ENCODE measurements at regions of chr4 and their contacts with region 1.

Region 1: GRCh38 chr4:165207431-165208220 is at the start of gene KLHL2:
- DNase-seq: peak; percentile 78
- H3K4me3 ChIP-seq: peak within 1 kb of the TSS; percentile 82 to 92
- H3K27ac ChIP-seq: peak within 1 kb of the TSS; percentile 72 to 84
- H3K4me1 ChIP-seq: no peaks in the 10 kb centered on the region
- H3K27me3 ChIP-seq: no peaks in the 10 kb centered on the region
- CTCF ChIP-seq: no peak
- POLR2A ChIP-seq: peak; percentile 36
- total RNA-seq, gene KLHL2: 20.4 to 22.2 TPM

Region 2: DNA sequence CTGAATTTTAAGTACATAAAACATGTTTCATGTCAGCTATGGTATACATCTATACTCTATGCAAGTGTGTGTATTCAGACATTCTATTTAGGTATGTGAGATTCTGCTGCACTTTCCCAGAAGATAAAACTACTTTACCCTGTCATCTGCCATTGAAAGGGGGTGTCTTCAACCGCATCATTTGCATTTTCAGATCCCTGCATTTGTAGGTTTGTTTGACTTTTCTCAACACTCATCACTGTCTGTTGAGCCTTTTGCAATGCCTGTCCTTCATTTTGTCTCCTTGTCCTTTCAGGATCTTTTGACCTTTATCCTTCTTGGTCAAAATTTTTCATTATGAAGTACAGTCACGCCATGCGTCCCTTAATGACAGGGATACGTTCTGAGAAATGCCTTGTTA is 1609.6 kb before region 1 on chr4:
- intact Hi-C with region 1: no loop called
- DNase-seq: no peak
- H3K4me3 ChIP-seq: no peak overlapping the region
- H3K27ac ChIP-seq: no peak overlapping the region
- H3K4me1 ChIP-seq: no peaks in the 10 kb centered on the region
- H3K27me3 ChIP-seq: no peaks in the 10 kb centered on the region
- CTCF ChIP-seq: no peak
- POLR2A ChIP-seq: no peak

Region 3: DNA sequence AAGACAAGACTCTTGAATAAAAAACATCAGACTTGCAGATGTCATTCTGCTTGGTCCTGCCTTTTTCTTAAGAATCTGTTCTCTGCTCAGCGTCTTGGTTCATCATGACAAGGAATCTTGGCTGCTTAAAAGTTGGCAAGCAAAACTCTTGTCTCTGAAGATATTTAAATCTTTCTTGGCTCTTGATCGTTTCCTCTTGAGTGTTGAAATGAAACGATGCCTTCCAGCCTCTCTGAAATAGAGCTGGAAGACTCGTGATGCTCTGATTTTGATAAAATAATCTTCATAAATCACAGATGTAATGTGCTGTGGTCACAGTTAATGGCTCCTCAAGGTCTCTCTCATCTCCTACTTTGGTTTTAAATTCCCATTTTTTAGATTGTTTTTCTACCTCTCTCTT is 55.1 kb before region 1 on chr4:
- intact Hi-C with region 1: no loop called
- DNase-seq: no peak
- H3K4me3 ChIP-seq: no peak overlapping the region
- H3K27ac ChIP-seq: no peak overlapping the region
- H3K4me1 ChIP-seq: no peaks in the 10 kb centered on the region
- H3K27me3 ChIP-seq: no peaks in the 10 kb centered on the region
- CTCF ChIP-seq: no peak
- POLR2A ChIP-seq: no peak

Region 4: DNA sequence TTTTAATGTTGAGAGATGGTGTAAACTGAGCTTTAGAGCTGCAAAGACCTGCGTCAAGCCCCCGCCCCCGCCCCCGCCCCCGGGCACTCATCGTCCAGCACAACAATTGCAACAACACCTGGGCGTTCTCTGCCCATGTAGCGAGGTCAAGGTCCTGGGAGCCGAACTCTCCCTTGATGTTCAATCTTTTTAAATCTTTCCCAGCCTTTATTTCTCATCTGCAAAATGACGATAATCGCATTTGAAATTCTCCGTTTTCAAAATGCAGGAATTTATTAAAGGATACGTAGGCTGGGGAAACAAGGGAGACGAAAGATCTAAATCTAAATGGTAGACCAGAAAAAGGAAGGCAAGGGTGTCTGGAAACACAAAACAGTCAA is 119.2 kb after region 1 on chr4:
- intact Hi-C with region 1: loop called (anchors 1 kb)
- DNase-seq: no peak
- H3K4me3 ChIP-seq: peak overlapping the region; percentile 70 to 79
- H3K27ac ChIP-seq: peak overlapping the region; percentile 84 to 91
- H3K4me1 ChIP-seq: no peaks in the 10 kb centered on the region
- H3K27me3 ChIP-seq: no peaks in the 10 kb centered on the region
- CTCF ChIP-seq: no peak
- POLR2A ChIP-seq: no peak

Region 5: DNA sequence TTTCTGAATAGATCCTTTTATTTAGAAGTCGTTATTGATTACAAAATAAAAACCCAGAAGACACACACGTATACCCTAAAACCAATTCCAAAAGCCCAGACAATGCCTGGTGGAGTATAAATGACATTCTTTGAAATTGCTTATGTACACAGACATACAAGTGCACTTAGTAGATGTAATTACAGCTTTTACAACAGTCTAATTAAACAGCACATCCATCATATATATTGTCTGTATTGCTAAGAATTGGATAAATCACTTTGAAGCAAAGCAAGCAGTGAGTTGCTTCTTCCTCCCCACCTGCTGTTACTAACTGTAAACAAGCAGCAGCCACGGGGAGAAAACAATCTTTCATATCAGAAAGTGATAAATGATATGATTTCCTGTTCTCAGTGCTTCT is 1311.2 kb after region 1 on chr4:
- intact Hi-C with region 1: no loop called
- DNase-seq: no peak
- H3K4me3 ChIP-seq: no peak overlapping the region
- H3K27ac ChIP-seq: no peak overlapping the region
- H3K4me1 ChIP-seq: no peaks in the 10 kb centered on the region
- H3K27me3 ChIP-seq: no peaks in the 10 kb centered on the region
- CTCF ChIP-seq: no peak
- POLR2A ChIP-seq: no peak

Measured in prostate gland (tissue), 2 donors.